Breast epithelium (tissue), 4 donors: ENCODE measurements at regions of chr1 and their contacts with region 1.

Region 1: GRCh38 chr1:111864791-111865190 is 109.1 kb downstream of the DDX20 start:
- DNase-seq: no peak
- H3K4me3 ChIP-seq: no peak overlapping the region
- H3K27ac ChIP-seq: no peak overlapping the region
- H3K4me1 ChIP-seq: no peaks in the 10 kb centered on the region
- H3K27me3 ChIP-seq: no peaks in the 10 kb centered on the region
- CTCF ChIP-seq: no peak
- POLR2A ChIP-seq: no peak

Region 2: DNA sequence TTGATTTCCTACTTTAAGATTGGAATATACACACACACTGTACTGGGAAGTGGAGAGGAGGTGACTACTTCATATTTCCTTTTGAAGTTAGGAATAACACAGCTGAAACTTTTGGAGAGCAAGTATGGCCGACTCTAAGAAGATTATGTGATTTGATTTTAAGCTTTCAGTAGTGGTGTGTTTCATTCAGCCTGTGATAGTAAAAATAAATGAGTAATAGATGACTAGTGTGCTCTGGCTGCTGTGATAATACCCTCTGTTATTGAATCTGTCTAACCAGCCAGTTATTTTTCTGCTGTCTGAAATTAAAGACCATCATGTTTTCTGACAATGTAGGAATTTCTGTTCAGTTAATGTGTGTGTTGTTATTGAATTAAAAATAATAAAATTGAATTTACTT is 579.5 kb after region 1 on chr1:
- intact Hi-C with region 1: loop called (anchors 5 kb)
- DNase-seq: no peak
- H3K4me3 ChIP-seq: no peak overlapping the region
- H3K27ac ChIP-seq: no peak overlapping the region
- H3K4me1 ChIP-seq: no peaks in the 10 kb centered on the region
- H3K27me3 ChIP-seq: no peaks in the 10 kb centered on the region
- CTCF ChIP-seq: no peak
- POLR2A ChIP-seq: no peak